Psoas muscle (tissue), 8 donors: ENCODE measurements at regions of chr7 and their contacts with region 1.

Region 1: GRCh38 chr7:92206019-92206418 is 27.1 kb upstream of the LRRD1 start:
- DNase-seq: no peak
- ATAC-seq: no peak
- H3K4me3 ChIP-seq: no peak overlapping the region
- H3K27ac ChIP-seq: no peak overlapping the region
- H3K4me1 ChIP-seq: no peaks in the 10 kb centered on the region
- H3K27me3 ChIP-seq: no peaks in the 10 kb centered on the region
- CTCF ChIP-seq: no peak

Region 2: DNA sequence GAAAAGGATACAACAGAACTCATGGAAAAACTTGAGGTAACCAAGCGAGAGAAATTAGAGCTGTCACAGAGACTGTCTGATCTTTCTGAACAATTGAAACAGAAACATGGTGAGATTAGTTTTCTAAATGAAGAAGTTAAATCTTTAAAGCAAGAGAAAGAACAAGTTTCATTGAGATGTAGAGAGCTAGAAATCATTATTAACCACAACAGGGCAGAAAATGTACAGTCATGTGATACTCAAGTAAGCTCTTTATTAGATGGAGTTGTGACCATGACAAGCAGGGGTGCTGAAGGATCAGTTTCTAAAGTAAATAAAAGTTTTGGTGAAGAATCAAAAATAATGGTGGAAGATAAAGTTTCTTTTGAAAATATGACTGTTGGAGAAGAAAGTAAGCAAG is 203.3 kb before region 1 on chr7:
- intact Hi-C with region 1: loop called in 1 of 2 experiments (anchors 10 kb)
- DNase-seq: no peak
- ATAC-seq: no peak
- H3K4me3 ChIP-seq: no peak overlapping the region
- H3K27ac ChIP-seq: no peak overlapping the region
- H3K4me1 ChIP-seq: no peaks in the 10 kb centered on the region
- H3K27me3 ChIP-seq: no peaks in the 10 kb centered on the region
- CTCF ChIP-seq: no peak

Region 3: GRCh38 chr7:92100534-92100933 is 105.5 kb before region 1 on chr7:
- intact Hi-C with region 1: loop called in 1 of 2 experiments (anchors 5 kb)
- DNase-seq: no peak
- ATAC-seq: no peak
- H3K4me3 ChIP-seq: no peak overlapping the region
- H3K27ac ChIP-seq: no peak overlapping the region
- H3K4me1 ChIP-seq: no peaks in the 10 kb centered on the region
- H3K27me3 ChIP-seq: no peaks in the 10 kb centered on the region
- CTCF ChIP-seq: no peak

Region 4: GRCh38 chr7:92489634-92490033 is 283.6 kb after region 1 on chr7:
- intact Hi-C with region 1: loop called in 1 of 2 experiments (anchors 10 kb)
- DNase-seq: no peak
- ATAC-seq: peak; percentile 46 to 89 (median 85)
- H3K4me3 ChIP-seq: no peak overlapping the region
- H3K27ac ChIP-seq: no peak overlapping the region
- H3K4me1 ChIP-seq: no peaks in the 10 kb centered on the region
- H3K27me3 ChIP-seq: no peaks in the 10 kb centered on the region
- CTCF ChIP-seq: no peak

Region 5: DNA sequence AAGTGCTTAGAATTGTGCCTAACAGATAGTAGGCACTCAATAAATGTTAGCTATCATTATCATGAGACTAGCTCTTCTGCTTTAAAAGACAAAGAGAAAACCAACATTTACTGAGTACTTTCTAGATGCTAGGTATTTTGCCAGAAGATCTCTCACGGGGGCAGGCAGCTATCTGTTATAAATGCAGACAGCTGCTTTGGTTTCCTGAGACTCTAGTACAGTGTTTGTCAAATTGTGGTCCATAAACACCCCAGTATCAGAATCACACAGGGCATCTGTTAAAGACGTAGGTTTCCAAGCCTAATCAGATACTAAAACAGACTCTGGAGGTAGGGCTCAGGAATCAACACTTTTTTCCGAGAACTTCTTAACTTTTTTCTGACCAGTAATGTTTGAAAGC is 370.3 kb after region 1 on chr7:
- intact Hi-C with region 1: loop called in 1 of 2 experiments (anchors 10 kb)
- DNase-seq: no peak
- ATAC-seq: no peak
- H3K4me3 ChIP-seq: no peak overlapping the region
- H3K27ac ChIP-seq: no peak overlapping the region
- H3K4me1 ChIP-seq: no peaks in the 10 kb centered on the region
- H3K27me3 ChIP-seq: no peaks in the 10 kb centered on the region
- CTCF ChIP-seq: no peak